Esophagus muscularis mucosa (tissue), 4 donors: ENCODE measurements at regions of chr5 and their contacts with region 1.

Region 1: DNA sequence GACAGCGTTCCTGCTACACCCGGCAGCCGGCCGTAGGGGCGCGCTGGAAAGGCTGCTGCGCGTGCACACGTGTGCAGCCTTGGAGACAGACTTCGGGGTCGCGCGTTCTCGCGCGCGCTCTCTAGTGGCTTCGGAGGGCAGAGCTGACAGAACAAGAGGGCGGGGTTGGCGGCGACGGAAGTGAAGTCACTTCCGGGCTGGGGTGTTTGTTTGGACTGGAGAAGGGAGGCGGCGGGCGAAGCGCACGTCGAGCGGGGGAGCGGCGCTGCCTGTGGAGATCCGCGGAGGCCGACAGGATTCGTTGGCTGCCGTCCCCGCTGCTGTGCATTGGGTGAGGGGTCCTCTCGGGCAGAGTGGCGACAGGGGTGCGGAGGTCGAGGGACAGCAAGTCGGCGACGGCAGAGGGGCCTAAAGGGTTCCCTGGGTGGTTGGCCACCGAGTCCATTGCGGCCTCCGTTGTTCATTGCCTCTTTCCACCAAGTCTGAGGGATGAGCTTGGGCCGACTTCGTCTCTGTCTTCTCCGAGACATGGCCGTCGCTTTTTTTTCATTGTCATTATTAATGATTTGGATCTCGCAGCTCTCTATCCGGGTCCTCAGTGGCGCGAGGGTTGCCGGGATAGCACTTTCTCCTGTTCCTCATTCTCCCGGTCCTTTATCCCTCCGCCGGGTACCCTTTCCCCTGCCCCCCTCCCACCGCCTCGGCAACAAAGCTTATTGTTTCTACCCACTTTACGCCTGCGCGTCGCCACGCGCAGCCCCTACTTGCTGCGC is at the start of gene PAIP2:
- DNase-seq: peak; percentile 99
- H3K4me3 ChIP-seq: peak within 1 kb of the TSS; percentile 78 to 98 (median 97)
- H3K27ac ChIP-seq: peak within 1 kb of the TSS; percentile 98 to 99 (median 98)
- H3K4me1 ChIP-seq: peaks cover 23 to 53% (median 48%) of the 10 kb centered on the region in 4 donors
- H3K27me3 ChIP-seq: no peaks in the 10 kb centered on the region
- CTCF ChIP-seq: peak; percentile 76 to 82 (median 79)
- EP300 ChIP-seq: no peak
- POLR2A ChIP-seq: peak; percentile 94
- total RNA-seq, gene PAIP2: 73.6 to 111 (median 97.0) TPM

Region 2: GRCh38 chr5:139294374-139295165 is 47.3 kb before region 1 on chr5:
- intact Hi-C with region 1: loop called (anchors 5 kb)
- DNase-seq: peak; percentile 94
- H3K4me3 ChIP-seq: peak overlapping the region; percentile 73 to 88 (median 87)
- H3K27ac ChIP-seq: peak overlapping the region; percentile 99 to 100 (median 99)
- H3K4me1 ChIP-seq: peaks cover 51 to 52% (median 51%) of the 10 kb centered on the region in 4 donors
- H3K27me3 ChIP-seq: no peaks in the 10 kb centered on the region
- CTCF ChIP-seq: peak in 2 of 3 experiments; percentile 8 to 19
- EP300 ChIP-seq: no peak
- POLR2A ChIP-seq: no peak